Lower leg skin (tissue), 4 donors: ENCODE measurements at regions of chr10 and their contacts with region 1.

Region 1: GRCh38 chr10:102917962-102918816 is at the start of gene CNNM2:
- DNase-seq: peak; percentile 100
- H3K4me3 ChIP-seq: peak within 1 kb of the TSS; percentile 80
- CTCF ChIP-seq: no peak
- POLR2A ChIP-seq: no peak
- total RNA-seq, gene CNNM2: 9.6 to 21.9 (median 14.5) TPM

Region 2: DNA sequence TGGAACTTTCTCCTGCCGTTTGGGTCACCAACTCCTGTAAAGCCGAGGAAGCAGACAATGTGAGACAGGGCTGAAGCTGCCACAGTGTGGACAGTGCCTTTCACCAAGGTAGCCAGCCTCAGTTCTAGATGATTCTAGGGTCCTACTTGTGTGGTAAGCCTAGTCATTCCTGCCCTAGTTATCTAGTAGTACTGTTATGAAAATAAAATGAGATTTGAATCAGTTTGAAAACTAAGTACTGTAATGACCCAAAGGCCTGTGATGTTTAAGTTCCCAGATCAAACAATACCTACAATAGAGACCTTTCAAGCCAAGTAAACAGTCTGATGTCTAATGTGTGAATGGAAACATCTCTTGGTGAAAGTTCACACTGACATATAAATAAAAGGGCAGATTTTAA is 1367.2 kb before region 1 on chr10:
- intact Hi-C with region 1: loop called (anchors 5 kb)
- DNase-seq: no peak
- H3K4me3 ChIP-seq: no peak overlapping the region
- CTCF ChIP-seq: no peak
- POLR2A ChIP-seq: no peak

Region 3: GRCh38 chr10:103069453-103070331 is 151.5 kb after region 1 on chr10:
- intact Hi-C with region 1: loop called (anchors 5 kb)
- DNase-seq: peak; percentile 28 to 90
- H3K4me3 ChIP-seq: no peak overlapping the region
- CTCF ChIP-seq: no peak
- POLR2A ChIP-seq: no peak

Region 4: GRCh38 chr10:103244663-103245271 is 326.6 kb after region 1 on chr10:
- intact Hi-C with region 1: loop called (anchors 5 kb)
- DNase-seq: peak; percentile 74 to 94
- H3K4me3 ChIP-seq: no peak overlapping the region
- CTCF ChIP-seq: peak in 1 of 3 donors; percentile 25
- POLR2A ChIP-seq: no peak